ENCODE measurements at regions of chr1 and their contacts with region 1.

Region 1: DNA sequence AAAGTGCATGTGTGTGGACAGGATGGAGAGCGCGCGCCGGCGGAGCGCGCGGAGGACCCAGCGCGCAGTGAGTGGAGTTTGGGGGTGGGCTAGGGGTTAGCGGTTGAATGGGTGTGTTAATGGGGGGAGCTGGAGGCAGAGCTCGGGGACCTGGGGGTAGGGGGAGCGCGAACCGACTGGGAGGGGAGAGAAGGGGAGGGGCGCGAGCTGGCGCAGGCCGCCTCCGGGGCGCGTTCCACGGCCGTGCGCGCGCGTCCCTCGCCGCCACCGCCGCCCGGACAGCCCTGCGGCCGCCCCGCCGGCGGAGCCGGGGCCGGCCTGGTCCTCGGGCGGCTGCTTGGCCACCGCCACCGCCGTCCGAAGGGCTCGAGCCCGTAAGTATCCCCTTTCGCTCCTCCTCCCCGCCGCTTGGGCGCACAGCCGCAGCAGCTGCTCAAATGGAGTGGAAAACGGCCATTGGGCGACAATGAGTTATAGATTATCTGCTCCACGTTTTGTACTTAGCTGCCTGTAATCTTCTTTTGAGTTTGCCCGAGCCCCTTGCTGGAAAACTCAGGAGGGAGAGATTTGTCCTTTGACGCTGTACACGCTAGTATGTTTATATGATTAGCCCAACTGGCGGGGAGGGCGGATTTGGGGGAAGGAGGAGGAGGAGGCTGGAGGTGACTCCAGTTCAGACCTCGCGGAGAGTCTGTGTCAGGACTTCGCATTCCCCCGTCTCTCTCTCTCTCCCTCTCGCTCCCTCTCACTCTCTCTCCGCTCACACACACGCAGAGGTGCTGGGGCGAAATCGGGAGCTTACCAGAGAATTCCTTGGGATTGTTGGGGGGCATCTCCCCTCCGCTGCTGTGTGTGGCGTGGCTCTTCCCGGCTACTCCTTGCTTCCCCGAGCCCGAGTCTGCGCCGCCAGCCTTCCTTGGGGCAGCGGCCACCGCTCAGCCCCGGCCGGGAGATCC is at the start of gene ADGRL2:
- DNase-seq: peak; percentile 91
- H3K4me3 ChIP-seq: peak within 1 kb of the TSS; percentile 80 to 94 (median 85)
- H3K27ac ChIP-seq: peak within 1 kb of the TSS; percentile 81
- H3K4me1 ChIP-seq: no peaks in the 10 kb centered on the region
- H3K27me3 ChIP-seq: no peaks in the 10 kb centered on the region
- CTCF ChIP-seq: no peak
- total RNA-seq, gene ADGRL2: 43.7 to 105 TPM

Region 2: GRCh38 chr1:81549604-81550127 is 251.3 kb before region 1 on chr1:
- CTCF ChIA-PET with region 1: no interaction called
- dilution Hi-C with region 1: no loop called
- in situ Hi-C with region 1: no loop called
- intact Hi-C with region 1: loop called (anchors 1 kb)
- DNase-seq: peak; percentile 40
- H3K4me3 ChIP-seq: no peak overlapping the region
- H3K27ac ChIP-seq: no peak overlapping the region
- H3K4me1 ChIP-seq: peaks cover 8% of the 10 kb centered on the region
- H3K27me3 ChIP-seq: no peaks in the 10 kb centered on the region
- CTCF ChIP-seq: peak; percentile 50 to 68

Region 3: GRCh38 chr1:81811757-81812371 is 10.9 kb after region 1 on chr1:
- CTCF ChIA-PET with region 1: no interaction called
- dilution Hi-C with region 1: no loop called
- in situ Hi-C with region 1: no loop called
- intact Hi-C with region 1: loop called (anchors 1 kb)
- DNase-seq: no peak
- H3K4me3 ChIP-seq: no peak overlapping the region
- H3K27ac ChIP-seq: peak overlapping the region; percentile 74
- H3K4me1 ChIP-seq: peaks cover 5% of the 10 kb centered on the region
- H3K27me3 ChIP-seq: no peaks in the 10 kb centered on the region
- CTCF ChIP-seq: peak; percentile 31 to 51

Region 4: DNA sequence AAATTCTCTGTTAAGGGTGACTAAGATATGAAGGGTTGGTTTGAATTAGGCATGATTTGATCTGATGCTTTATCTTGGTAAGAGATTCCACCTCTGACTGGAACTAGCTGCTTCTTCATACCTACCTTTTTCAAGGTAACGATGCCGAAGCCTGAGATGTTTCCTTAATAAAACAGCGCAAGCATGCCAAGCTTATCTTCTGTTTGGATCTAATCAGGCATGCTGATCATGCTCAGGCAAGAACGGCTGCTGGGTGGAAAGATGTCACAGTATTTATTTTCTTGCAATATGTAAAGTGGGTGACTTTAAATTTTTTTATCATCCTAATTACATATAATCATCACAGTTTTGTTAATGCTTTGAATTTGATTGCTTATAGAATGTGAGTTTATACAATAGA is 148.5 kb after region 1 on chr1:
- CTCF ChIA-PET with region 1: no interaction called
- dilution Hi-C with region 1: no loop called
- in situ Hi-C with region 1: no loop called
- intact Hi-C with region 1: loop called (anchors 2 kb)
- DNase-seq: peak; percentile 45
- H3K4me3 ChIP-seq: peak overlapping the region in 2 of 3 experiments; percentile 25 to 31
- H3K27ac ChIP-seq: peak overlapping the region; percentile 43
- H3K4me1 ChIP-seq: peaks cover 10% of the 10 kb centered on the region
- H3K27me3 ChIP-seq: no peaks in the 10 kb centered on the region
- CTCF ChIP-seq: no peak

Region 5: DNA sequence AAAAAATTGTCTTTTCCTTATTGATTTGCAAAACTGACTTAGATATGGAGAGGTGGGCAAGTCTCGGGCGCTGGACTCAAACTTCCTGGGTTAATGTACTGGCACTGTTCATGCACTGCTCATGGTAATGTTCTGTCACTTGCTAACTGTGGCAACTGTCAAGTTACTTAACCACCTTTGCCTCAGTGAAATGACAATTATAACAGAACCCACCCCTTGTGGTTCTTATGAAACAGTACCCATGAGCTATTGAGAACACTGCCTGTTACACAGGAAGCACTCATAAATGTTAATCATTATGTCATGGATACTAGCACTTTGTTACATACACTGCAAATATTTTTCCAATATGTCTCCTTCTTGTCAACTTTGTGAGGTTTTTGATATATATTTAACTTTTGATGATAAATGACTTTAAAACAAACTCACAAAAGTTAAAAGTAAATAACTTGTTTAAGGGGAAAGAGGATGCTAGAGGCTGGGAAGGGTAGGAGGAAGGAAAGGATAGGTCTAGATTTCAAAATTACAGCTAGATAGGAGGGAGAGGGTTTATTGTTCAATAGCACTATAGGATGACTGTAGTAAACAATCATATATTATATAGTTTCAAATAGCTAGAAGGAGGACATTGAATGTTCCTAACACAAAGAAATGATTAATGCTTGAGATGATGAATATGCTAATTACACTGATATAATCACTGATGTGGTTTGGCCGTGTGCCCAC is 342.3 kb after region 1 on chr1:
- CTCF ChIA-PET with region 1: no interaction called
- dilution Hi-C with region 1: no loop called
- in situ Hi-C with region 1: no loop called
- intact Hi-C with region 1: loop called (anchors 5 kb)
- DNase-seq: no peak
- H3K4me3 ChIP-seq: no peak overlapping the region
- H3K27ac ChIP-seq: no peak overlapping the region
- H3K4me1 ChIP-seq: peaks cover 14% of the 10 kb centered on the region
- H3K27me3 ChIP-seq: no peaks in the 10 kb centered on the region
- CTCF ChIP-seq: no peak

Region 6: GRCh38 chr1:82441402-82441801 is 640.4 kb after region 1 on chr1:
- CTCF ChIA-PET with region 1: no interaction called
- dilution Hi-C with region 1: no loop called
- in situ Hi-C with region 1: no loop called
- intact Hi-C with region 1: loop called (anchors 5 kb)
- DNase-seq: no peak
- H3K4me3 ChIP-seq: no peak overlapping the region
- H3K27ac ChIP-seq: no peak overlapping the region
- H3K4me1 ChIP-seq: no peaks in the 10 kb centered on the region
- H3K27me3 ChIP-seq: no peaks in the 10 kb centered on the region
- CTCF ChIP-seq: no peak

Region 7: DNA sequence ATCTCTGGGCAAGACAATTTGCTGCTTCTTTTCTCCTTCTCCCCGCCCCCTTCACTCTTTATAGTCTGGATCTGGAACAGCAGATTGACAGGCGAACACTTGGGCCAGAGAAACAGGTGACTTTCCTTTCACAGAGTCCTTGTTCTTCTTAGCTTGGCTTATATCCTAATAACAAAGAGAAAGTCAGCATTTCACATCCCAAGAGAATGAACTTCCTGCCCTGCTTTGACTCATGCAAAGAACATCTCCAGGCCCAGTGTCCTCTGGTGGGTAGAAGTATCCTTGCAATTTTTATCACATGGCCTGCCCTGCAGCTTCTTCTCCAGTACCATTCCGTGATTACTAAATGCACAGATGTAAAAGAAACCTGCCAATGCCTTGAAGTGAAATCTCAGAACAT is 764.2 kb after region 1 on chr1:
- CTCF ChIA-PET with region 1: no interaction called
- dilution Hi-C with region 1: no loop called
- in situ Hi-C with region 1: no loop called
- intact Hi-C with region 1: loop called (anchors 2 kb)
- DNase-seq: peak; percentile 75
- H3K4me3 ChIP-seq: peak overlapping the region in 2 of 3 experiments; percentile 20 to 22
- H3K27ac ChIP-seq: peak overlapping the region; percentile 71
- H3K4me1 ChIP-seq: peaks cover 23% of the 10 kb centered on the region
- H3K27me3 ChIP-seq: no peaks in the 10 kb centered on the region
- CTCF ChIP-seq: peak; percentile 30 to 36

Measured in mammary epithelial cell (primary cell).